ENCODE measurements at regions of chr1 and their contacts with region 1.

Region 1: DNA sequence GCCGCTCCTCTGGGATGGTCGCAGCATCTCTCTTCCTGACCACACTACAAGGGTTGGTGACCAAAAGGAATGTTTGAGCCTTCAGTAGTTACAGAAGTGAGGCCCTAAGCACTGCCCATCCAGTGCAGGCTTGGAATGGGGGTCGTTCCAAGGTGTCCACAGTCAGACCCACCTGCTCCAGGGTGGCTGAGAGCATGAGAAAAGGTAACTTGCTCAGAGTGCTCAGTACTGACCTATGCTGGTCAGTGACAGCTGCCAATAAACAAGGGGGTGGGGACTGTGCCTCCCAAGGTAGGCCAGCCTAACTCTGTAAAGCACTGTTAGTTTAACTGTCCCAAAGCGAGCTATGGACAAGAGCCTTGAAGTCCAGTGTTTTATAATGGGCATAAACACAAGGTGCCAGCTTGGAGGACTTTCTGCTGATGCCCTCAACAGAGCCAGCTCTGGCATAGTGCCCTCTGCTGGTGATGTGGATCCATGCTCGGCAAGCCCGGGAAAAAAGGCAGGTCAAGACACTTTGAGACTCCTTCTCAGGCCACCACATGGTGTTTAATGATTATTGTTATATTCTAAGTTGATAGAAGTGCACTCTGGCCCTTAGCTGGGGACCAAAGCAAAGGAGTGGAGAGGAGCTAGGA is 78.1 kb upstream of the DNAH14 start:
- DNase-seq: peak; percentile 82
- H3K4me3 ChIP-seq: no peak overlapping the region
- H3K27ac ChIP-seq: no peak overlapping the region
- H3K4me1 ChIP-seq: no peaks in the 10 kb centered on the region
- H3K27me3 ChIP-seq: no peaks in the 10 kb centered on the region

Region 2: DNA sequence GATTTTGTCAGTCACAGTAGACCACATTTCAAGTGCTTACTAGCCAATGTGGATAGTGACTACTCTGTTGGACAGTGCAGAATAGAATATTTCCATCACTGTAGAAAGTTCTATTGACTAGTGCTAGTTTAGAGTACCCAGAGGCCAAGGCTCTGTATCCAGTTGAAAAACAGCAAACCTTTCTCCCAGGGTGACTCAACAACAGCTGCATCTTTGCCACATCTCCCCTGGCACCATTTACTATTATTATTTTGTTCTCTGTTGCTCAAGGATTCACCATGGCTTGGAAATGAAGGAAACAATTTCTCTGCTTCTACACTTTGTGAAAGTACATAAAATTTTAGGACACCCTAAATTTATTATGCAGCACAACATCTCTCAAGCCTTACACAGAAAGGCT is 331.5 kb before region 1 on chr1:
- in situ Hi-C with region 1: loop called (anchors 5 kb)
- DNase-seq: peak; percentile 51
- H3K4me3 ChIP-seq: no peak overlapping the region
- H3K27ac ChIP-seq: no peak overlapping the region
- H3K4me1 ChIP-seq: peaks cover 10% of the 10 kb centered on the region
- H3K27me3 ChIP-seq: no peaks in the 10 kb centered on the region

Region 3: GRCh38 chr1:224644553-224645154 is 206.7 kb before region 1 on chr1:
- in situ Hi-C with region 1: loop called (anchors 10 kb)
- DNase-seq: peak; percentile 49
- H3K4me3 ChIP-seq: no peak overlapping the region
- H3K27ac ChIP-seq: no peak overlapping the region
- H3K4me1 ChIP-seq: no peaks in the 10 kb centered on the region
- H3K27me3 ChIP-seq: no peaks in the 10 kb centered on the region